ENCODE measurements at regions of chr6 and their contacts with region 1.

Region 1: GRCh38 chr6:42453031-42453653 is 1.4 kb upstream of the TRERF1 start:
- DNase-seq: peak; percentile 90
- ATAC-seq: peak; percentile 86
- H3K4me3 ChIP-seq: peak overlapping the region; percentile 88
- H3K27ac ChIP-seq: peak overlapping the region; percentile 100
- H3K4me1 ChIP-seq: peaks cover 7% of the 10 kb centered on the region
- H3K27me3 ChIP-seq: no peaks in the 10 kb centered on the region
- CTCF ChIP-seq: no peak
- POLR2A ChIP-seq: no peak
- RAD21 ChIP-seq: 0 out of 2 replicates have a peak, but pooled peaks have one; percentile 7

Region 2: GRCh38 chr6:42217519-42218367 is 235.4 kb before region 1 on chr6 and contains the start of gene MRPS10:
- CTCF ChIA-PET with region 1: interaction called, 3 read pairs
- POLR2A ChIA-PET with region 1: no interaction called
- dilution Hi-C with region 1: no loop called
- in situ Hi-C with region 1: no loop called
- intact Hi-C with region 1: loop called (anchors 1 kb)
- DNase-seq: peak; percentile 94
- ATAC-seq: peak; percentile 98
- H3K4me3 ChIP-seq: peak within 1 kb of the TSS; percentile 82
- H3K27ac ChIP-seq: peak within 1 kb of the TSS; percentile 83
- H3K4me1 ChIP-seq: peaks cover 2% of the 10 kb centered on the region; the same call in 1 of the 2 replicates
- H3K27me3 ChIP-seq: no peaks in the 10 kb centered on the region
- CTCF ChIP-seq: no peak
- POLR2A ChIP-seq: peak; percentile 85
- RAD21 ChIP-seq: no peak
- total RNA-seq, gene MRPS10: 47.0 and 71.1 TPM in 2 replicates

Region 3: DNA sequence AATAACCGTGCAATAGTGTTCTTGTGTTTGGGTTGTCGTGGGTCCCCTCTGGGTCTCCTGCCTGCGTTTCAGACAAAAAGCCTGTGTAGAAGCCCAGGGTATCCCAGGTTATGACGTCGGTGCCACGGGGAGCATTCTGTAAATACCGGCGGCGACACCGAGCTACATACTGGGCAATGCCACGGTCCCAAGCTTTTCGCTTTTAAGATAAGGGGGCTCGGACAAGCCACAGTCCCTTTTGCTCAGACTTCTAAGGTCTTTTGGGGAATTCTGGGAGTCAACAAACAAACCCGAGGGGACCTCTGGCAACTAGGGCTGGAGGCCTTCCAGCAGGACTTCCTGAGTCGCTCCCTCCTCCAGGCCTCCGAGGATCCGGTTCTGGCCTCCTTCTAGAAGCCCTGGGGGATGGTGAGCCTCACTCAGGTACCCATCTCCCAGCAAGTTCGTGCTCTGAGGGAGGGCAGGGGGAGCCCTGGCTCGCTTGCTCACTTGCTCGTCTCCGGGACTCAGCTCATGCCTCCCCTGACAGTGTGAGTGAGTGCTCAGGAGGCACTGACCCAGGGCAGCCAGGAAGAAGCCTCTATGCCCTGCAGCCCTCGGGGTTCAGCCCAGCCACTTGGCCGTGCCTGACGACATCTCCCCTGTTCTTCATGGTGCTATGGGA is 173.0 kb before region 1 on chr6:
- CTCF ChIA-PET with region 1: no interaction called
- POLR2A ChIA-PET with region 1: no interaction called
- dilution Hi-C with region 1: no loop called
- in situ Hi-C with region 1: no loop called
- intact Hi-C with region 1: loop called (anchors 5 kb)
- DNase-seq: peak; percentile 59
- ATAC-seq: peak; percentile 63
- H3K4me3 ChIP-seq: no peak overlapping the region
- H3K27ac ChIP-seq: peak overlapping the region; percentile 38
- H3K4me1 ChIP-seq: peaks cover 40% of the 10 kb centered on the region
- H3K27me3 ChIP-seq: no peaks in the 10 kb centered on the region
- CTCF ChIP-seq: no peak
- POLR2A ChIP-seq: no peak
- RAD21 ChIP-seq: no peak

Region 4: GRCh38 chr6:42315991-42316378 is 137.2 kb before region 1 on chr6:
- CTCF ChIA-PET with region 1: no interaction called
- POLR2A ChIA-PET with region 1: no interaction called
- dilution Hi-C with region 1: no loop called
- in situ Hi-C with region 1: no loop called
- intact Hi-C with region 1: loop called (anchors 2 kb)
- DNase-seq: peak; percentile 99
- ATAC-seq: peak; percentile 79
- H3K4me3 ChIP-seq: no peak overlapping the region
- H3K27ac ChIP-seq: peak overlapping the region; percentile 93
- H3K4me1 ChIP-seq: peaks cover 41% of the 10 kb centered on the region
- H3K27me3 ChIP-seq: no peaks in the 10 kb centered on the region
- CTCF ChIP-seq: no peak
- POLR2A ChIP-seq: no peak
- RAD21 ChIP-seq: peak; percentile 19; the same call in 1 of the 2 replicates

Region 5: DNA sequence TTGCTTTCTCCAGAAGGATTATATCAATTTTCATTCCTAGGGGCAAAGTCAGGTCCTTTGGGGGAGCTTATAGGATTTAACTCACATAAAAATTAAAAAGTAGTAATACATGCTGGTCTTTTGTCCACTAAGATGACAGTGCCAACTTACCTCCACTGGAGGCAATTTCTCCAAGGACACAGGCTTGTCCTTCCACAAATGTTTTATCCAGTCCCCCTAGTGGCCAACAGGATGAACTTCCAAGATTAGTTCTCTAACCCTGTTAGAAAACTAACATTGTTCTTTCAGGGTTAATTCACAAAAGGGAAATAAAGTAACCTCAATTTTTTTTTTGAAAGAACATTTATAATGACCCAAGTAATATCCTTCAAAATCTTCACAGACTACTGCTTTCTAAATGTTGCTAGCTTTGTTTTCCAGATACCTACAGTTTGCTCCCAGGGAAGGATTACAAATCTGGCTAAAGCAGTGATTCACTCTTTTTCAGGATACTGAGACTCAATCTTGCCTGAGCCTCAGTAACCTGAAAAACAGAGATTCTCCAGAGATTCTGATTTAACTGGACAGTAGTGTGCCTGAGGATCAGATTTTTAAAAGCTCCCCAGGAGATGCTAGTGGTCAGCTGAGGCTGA is 79.0 kb after region 1 on chr6:
- CTCF ChIA-PET with region 1: interaction called, 4 read pairs
- POLR2A ChIA-PET with region 1: no interaction called
- dilution Hi-C with region 1: no loop called
- in situ Hi-C with region 1: no loop called
- intact Hi-C with region 1: loop called (anchors 2 kb)
- DNase-seq: peak; percentile 73
- ATAC-seq: peak; percentile 86
- H3K4me3 ChIP-seq: no peak overlapping the region
- H3K27ac ChIP-seq: no peak overlapping the region
- H3K4me1 ChIP-seq: no peaks in the 10 kb centered on the region; the same call in 1 of the 2 replicates
- H3K27me3 ChIP-seq: no peaks in the 10 kb centered on the region
- CTCF ChIP-seq: peak; percentile 85
- POLR2A ChIP-seq: no peak
- RAD21 ChIP-seq: peak; percentile 73